ENCODE measurements at regions of chr1 and their contacts with region 1.

Region 1: DNA sequence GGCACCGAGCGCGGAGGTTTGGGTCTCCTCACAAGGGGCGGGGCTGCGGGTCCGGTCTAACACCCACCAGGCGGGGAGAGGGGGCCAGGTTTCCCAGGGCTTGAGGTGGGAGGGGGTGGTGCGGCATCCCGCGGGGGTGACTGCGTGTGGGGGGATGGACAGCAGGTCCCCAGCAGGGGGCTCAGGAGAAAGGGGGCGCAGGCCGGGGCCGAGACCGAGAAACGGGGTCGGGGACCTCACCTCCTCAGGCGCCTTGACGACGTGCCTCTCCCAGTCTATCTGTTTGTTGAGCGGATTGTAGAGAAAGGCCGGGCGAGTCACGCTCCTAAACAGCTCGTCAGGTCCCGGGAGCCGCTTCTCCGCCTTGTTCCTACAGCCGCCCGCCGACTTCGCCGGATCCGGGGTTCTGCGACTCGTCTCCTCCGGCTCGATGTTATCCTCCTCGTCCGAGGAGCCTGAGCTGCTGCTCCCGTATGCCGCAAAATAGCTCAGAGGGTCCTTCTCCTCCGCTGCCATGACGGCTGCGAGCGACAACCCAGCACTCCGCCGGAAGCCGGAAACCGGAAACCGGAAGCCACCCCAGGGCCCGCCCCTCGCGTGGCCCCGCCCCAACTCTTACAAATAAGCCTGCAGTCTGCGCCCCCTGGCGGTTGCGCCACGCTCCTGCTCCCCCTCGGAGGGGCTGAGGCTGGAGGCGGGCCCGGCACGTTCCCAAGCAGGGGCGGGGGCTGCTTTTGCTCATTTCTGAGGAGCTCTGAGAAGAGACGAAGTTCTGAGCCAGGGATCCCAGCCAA is at the start of gene C1orf52:
- DNase-seq: peak; percentile 95 to 96
- H3K4me3 ChIP-seq: peak within 1 kb of the TSS; percentile 0 to 87 (median 69)
- H3K27ac ChIP-seq: peak within 1 kb of the TSS; percentile 54 to 82 (median 55)
- H3K4me1 ChIP-seq: peaks cover 0 to 11% of the 10 kb centered on the region in 2 donors
- H3K27me3 ChIP-seq: no peaks in the 10 kb centered on the region
- CTCF ChIP-seq: peak; percentile 92 to 100 (median 98)
- POLR2A ChIP-seq: peak in 1 of 2 donors; percentile 75
- total RNA-seq, gene C1orf52: 9.0 to 28.7 (median 17.5) TPM

Region 2: GRCh38 chr1:84944767-84945486 is 314.4 kb before region 1 on chr1:
- intact Hi-C with region 1: loop called (anchors 5 kb)
- DNase-seq: peak; percentile 52 to 61
- H3K4me3 ChIP-seq: peak overlapping the region in 2 of 3 donors; percentile 10 to 20
- H3K27ac ChIP-seq: peak overlapping the region; percentile 3 to 58 (median 52)
- H3K4me1 ChIP-seq: peaks cover 0 to 4% of the 10 kb centered on the region in 2 donors
- H3K27me3 ChIP-seq: no peaks in the 10 kb centered on the region
- CTCF ChIP-seq: peak; percentile 78 to 95 (median 86)
- POLR2A ChIP-seq: no peak

Region 3: GRCh38 chr1:85061711-85062424 is 197.4 kb before region 1 on chr1:
- intact Hi-C with region 1: no loop called
- DNase-seq: peak; percentile 92
- H3K4me3 ChIP-seq: peak overlapping the region; percentile 30 to 33 (median 31)
- H3K27ac ChIP-seq: peak overlapping the region; percentile 7 to 69 (median 51)
- H3K4me1 ChIP-seq: peaks cover 0 to 6% of the 10 kb centered on the region in 2 donors
- H3K27me3 ChIP-seq: no peaks in the 10 kb centered on the region
- CTCF ChIP-seq: no peak
- POLR2A ChIP-seq: peak in 1 of 2 donors; percentile 52

Region 4: GRCh38 chr1:85109475-85109874 is 149.8 kb before region 1 on chr1:
- intact Hi-C with region 1: loop called (anchors 5 kb)
- DNase-seq: peak; percentile 65 to 68
- H3K4me3 ChIP-seq: no peak overlapping the region
- H3K27ac ChIP-seq: no peak overlapping the region
- H3K4me1 ChIP-seq: no peaks in the 10 kb centered on the region
- H3K27me3 ChIP-seq: no peaks in the 10 kb centered on the region
- CTCF ChIP-seq: peak; percentile 46 to 94 (median 85)
- POLR2A ChIP-seq: no peak

Region 5: DNA sequence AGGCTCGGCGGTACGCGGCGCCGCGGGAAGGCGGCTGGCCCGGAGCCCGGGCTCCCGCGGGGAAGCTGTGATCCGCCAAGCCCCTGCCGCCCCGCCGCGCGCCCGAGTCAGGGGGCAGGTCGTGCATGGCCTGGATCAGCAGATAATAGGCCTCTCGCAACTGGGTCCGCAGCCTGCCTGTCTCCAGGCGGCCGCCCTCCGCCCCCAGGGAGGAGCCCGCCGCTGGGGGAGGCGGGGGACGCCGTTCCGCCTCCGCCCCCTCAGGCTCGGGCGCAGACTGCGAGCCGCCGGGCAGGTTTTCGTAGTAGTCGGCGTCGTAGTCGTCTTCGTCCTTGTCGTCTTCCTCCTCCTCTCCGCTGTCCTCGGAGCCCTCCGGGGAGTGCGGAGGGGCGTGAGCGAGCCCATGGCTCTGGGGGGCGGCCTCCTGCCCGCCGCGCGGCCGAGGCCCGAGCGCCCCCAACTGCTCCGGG is 58.4 kb before region 1 on chr1 and contains the start of gene SYDE2:
- intact Hi-C with region 1: loop called (anchors 5 kb)
- DNase-seq: peak; percentile 89 to 91
- H3K4me3 ChIP-seq: peak within 1 kb of the TSS; percentile 65 to 80 (median 72)
- H3K27ac ChIP-seq: peak within 1 kb of the TSS; percentile 95 to 97 (median 95)
- H3K4me1 ChIP-seq: peaks cover 0 to 17% of the 10 kb centered on the region in 2 donors
- H3K27me3 ChIP-seq: no peaks in the 10 kb centered on the region
- CTCF ChIP-seq: no peak
- POLR2A ChIP-seq: peak; percentile 73 to 95
- total RNA-seq, gene SYDE2: 15.2 to 30.8 (median 20.5) TPM

Region 6: DNA sequence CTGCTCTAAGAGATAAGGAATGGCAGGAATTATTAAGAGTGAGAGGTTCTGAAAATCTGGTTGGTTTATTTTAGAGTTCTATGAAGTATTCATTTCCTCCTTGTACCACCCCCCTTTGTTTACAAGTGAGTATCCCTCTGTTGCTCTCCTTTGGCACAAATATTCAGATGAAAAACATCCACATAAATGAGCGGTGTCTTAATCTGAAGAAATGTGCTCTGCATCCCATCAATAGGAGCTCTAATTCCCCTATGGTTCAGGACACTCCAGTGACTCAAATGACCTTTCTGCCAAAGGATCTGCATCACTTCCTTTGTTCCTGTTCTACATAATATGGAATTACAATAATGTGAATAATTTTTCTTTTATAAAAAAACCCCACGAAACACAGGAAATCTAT is 189.0 kb after region 1 on chr1:
- intact Hi-C with region 1: no loop called
- DNase-seq: no peak
- H3K4me3 ChIP-seq: no peak overlapping the region
- H3K27ac ChIP-seq: no peak overlapping the region
- H3K4me1 ChIP-seq: peaks cover under 1 to 17% of the 10 kb centered on the region in 2 donors
- H3K27me3 ChIP-seq: no peaks in the 10 kb centered on the region
- CTCF ChIP-seq: no peak
- POLR2A ChIP-seq: no peak